ENCODE measurements at regions of chr11 and their contacts with region 1.

Region 1: GRCh38 chr11:10857709-10858438 is at the start of gene ZBED5:
- DNase-seq: peak; percentile 98
- ATAC-seq: peak; percentile 95
- H3K4me3 ChIP-seq: peak within 1 kb of the TSS; percentile 87 to 91
- H3K27ac ChIP-seq: peak within 1 kb of the TSS; percentile 100
- H3K4me1 ChIP-seq: peaks cover 44% of the 10 kb centered on the region
- H3K27me3 ChIP-seq: no peaks in the 10 kb centered on the region
- CTCF ChIP-seq: no peak
- total RNA-seq, gene ZBED5: 114 TPM

Region 2: GRCh38 chr11:10592331-10592730 is 265.5 kb before region 1 on chr11:
- CTCF ChIA-PET with region 1: no interaction called
- POLR2A ChIA-PET with region 1: no interaction called
- in situ Hi-C with region 1: no loop called
- intact Hi-C with region 1: no loop called
- DNase-seq: no peak
- ATAC-seq: no peak
- H3K4me3 ChIP-seq: no peak overlapping the region
- H3K27ac ChIP-seq: no peak overlapping the region
- H3K4me1 ChIP-seq: no peaks in the 10 kb centered on the region
- H3K27me3 ChIP-seq: peaks cover 28% of the 10 kb centered on the region; the same call in 1 of the 2 replicates
- CTCF ChIP-seq: no peak

Region 3: DNA sequence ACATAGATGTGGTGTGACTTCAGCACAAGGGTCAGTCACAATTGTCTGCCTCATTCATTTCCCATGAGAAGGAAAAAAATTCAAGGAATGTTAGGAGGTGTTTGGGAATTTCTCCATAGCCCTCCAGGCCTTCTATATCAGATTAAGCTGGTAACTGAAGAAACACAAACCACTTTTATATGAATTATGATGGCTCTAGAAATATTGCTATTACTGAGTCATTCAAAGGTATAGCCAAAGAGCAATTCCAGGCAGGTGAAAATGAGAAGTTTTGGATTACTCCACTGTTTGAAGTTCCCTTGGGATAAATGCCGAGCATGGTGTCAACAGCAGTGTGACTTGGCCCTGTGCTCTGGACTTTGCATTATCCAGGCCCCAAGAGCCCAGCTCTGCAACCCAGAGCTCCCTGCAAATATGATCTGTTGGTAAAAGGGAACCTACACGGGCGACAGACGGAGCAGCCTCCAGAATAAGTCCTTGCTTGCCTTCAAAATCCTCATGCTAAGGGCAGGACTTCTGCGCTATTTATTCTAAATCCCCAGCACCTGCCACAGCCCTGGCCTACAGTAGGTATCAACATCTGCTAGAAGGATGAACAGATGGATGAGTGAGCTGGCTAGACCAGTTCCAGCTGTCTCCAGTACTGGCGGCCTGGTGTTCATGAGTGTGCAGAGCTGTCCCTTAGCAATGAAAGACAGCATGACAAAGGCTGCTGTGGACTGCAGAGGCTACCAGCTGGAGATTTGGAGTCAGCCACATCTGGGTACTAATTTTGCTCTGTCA is 67.5 kb after region 1 on chr11:
- CTCF ChIA-PET with region 1: no interaction called
- POLR2A ChIA-PET with region 1: interaction called, 8 read pairs
- in situ Hi-C with region 1: no loop called
- intact Hi-C with region 1: loop called (anchors 2 kb)
- DNase-seq: no peak
- ATAC-seq: peak; percentile 81
- H3K4me3 ChIP-seq: no peak overlapping the region
- H3K27ac ChIP-seq: peak overlapping the region; percentile 98
- H3K4me1 ChIP-seq: peaks cover 59% of the 10 kb centered on the region
- H3K27me3 ChIP-seq: no peaks in the 10 kb centered on the region
- CTCF ChIP-seq: no peak

Region 4: GRCh38 chr11:10973416-10973815 is 115.5 kb after region 1 on chr11:
- CTCF ChIA-PET with region 1: no interaction called
- POLR2A ChIA-PET with region 1: no interaction called
- in situ Hi-C with region 1: no loop called
- intact Hi-C with region 1: no loop called
- DNase-seq: no peak
- ATAC-seq: no peak
- H3K4me3 ChIP-seq: no peak overlapping the region
- H3K27ac ChIP-seq: no peak overlapping the region
- H3K4me1 ChIP-seq: no peaks in the 10 kb centered on the region
- H3K27me3 ChIP-seq: no peaks in the 10 kb centered on the region
- CTCF ChIP-seq: no peak

Region 5: GRCh38 chr11:11588243-11588642 is 730.4 kb after region 1 on chr11:
- CTCF ChIA-PET with region 1: no interaction called
- POLR2A ChIA-PET with region 1: interaction called, 17 read pairs
- in situ Hi-C with region 1: no loop called
- intact Hi-C with region 1: no loop called
- DNase-seq: no peak
- ATAC-seq: no peak
- H3K4me3 ChIP-seq: no peak overlapping the region
- H3K27ac ChIP-seq: peak overlapping the region; percentile 48
- H3K4me1 ChIP-seq: peaks cover 31% of the 10 kb centered on the region
- H3K27me3 ChIP-seq: no peaks in the 10 kb centered on the region
- CTCF ChIP-seq: no peak